ENCODE measurements at regions of chr1 and their contacts with region 1.

Region 1: GRCh38 chr1:169711469-169712281 is at the start of gene SELL:
- DNase-seq: no peak
- H3K4me3 ChIP-seq: peak within 1 kb of the TSS; percentile 14 to 42 (median 20)
- H3K27ac ChIP-seq: no peak within 1 kb of the TSS
- H3K4me1 ChIP-seq: peaks cover 0 to 3% (median 0%) of the 10 kb centered on the region in 4 donors
- H3K27me3 ChIP-seq: peaks cover 0 to 6% (median 0%) of the 10 kb centered on the region in 4 donors
- CTCF ChIP-seq: peak; percentile 53 to 70 (median 58)
- EP300 ChIP-seq: no peak
- POLR2A ChIP-seq: no peak
- total RNA-seq, gene SELL: 0.42 to 11.9 (median 0.86) TPM

Region 2: GRCh38 chr1:169466259-169467230 is 245.1 kb before region 1 on chr1:
- intact Hi-C with region 1: no loop called
- DNase-seq: no peak
- H3K4me3 ChIP-seq: no peak overlapping the region
- H3K27ac ChIP-seq: no peak overlapping the region
- H3K4me1 ChIP-seq: no peaks in the 10 kb centered on the region
- H3K27me3 ChIP-seq: no peaks in the 10 kb centered on the region
- CTCF ChIP-seq: peak; percentile 38 to 44 (median 39)
- EP300 ChIP-seq: no peak
- POLR2A ChIP-seq: no peak

Region 3: DNA sequence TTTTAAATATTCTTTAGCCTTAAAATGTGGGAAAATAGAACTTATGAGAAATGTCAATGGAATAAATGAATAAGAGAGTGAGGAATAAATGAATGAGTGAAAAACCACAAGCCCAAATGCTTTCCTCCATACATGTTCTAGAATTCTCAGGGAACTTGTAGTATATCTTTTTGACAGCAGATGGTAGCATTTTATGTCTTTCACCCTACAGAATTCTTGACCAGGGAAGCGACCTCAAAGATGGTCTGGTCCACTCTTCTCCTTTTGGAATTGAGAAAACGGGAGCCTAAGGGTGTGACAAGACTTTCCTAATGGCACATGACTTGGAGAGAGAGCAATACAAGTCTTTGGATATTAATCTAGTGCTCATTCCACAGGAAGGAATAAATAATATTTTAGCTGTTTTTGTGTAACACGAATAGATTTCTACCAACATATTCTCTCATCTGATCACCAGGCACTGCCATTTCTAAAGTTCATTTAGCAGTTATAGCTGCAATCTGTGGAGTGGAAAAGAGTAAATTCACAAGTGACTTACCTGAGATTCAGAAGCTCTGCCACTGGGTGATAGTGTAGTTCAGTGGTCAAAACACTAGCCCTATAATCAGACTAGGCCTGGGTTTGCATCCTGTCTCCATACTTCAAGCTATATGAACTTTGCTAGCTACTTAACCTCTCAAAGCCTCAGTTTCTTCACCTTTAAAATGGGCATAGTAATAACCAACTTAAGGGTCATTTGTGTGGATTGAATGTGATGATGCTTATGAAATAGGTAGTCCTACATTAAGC is 110.4 kb before region 1 on chr1:
- intact Hi-C with region 1: loop called (anchors 5 kb)
- DNase-seq: peak; percentile 50
- H3K4me3 ChIP-seq: no peak overlapping the region
- H3K27ac ChIP-seq: no peak overlapping the region
- H3K4me1 ChIP-seq: no peaks in the 10 kb centered on the region
- H3K27me3 ChIP-seq: peaks cover 0 to 6% (median 0%) of the 10 kb centered on the region in 4 donors
- CTCF ChIP-seq: peak; percentile 8 to 25 (median 15)
- EP300 ChIP-seq: no peak
- POLR2A ChIP-seq: no peak